ENCODE measurements at regions of chr13 and their contacts with region 1.

Region 1: DNA sequence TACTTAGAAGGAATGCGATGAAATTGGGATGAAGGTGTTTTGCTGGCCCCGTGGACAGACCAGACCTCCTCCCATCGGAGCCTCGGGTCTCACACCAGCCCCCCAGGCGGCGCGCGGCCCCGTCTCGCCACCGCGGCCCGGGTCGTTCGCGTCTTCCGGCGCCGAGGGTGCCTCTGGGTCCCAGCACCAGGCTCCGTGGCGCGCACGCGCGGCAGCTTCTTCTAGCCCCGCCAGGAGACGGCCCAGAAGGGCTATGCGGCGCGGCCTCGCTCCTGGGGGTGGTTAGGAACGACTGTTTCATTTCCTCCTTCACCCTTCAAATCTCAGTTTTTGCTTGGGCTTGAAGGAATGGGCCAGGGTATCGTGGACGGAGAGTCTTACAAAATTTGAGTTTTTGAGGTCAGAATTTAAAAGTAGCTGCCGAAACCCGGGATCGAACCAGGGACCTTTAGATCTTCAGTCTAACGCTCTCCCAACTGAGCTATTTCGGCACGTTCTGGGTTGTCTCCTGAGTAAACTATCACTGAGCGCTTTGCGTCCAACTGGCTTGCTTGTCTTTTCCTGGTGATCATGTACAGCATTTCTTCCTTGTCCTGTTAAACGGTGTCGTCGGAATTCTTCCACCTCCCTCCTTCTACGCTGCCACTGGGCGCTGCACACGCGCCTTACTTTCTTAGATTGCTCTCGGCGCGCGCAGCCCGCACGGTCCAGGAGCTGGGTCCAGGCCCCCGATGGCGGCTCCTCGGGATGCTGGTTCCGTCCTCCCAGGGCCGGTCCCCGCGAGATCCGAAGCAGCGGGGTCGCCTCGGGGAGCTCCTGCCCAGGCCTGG is 46.5 kb downstream of the TGDS start:
- DNase-seq: peak; percentile 87
- H3K4me3 Mint-ChIP-seq: peak overlapping the region; percentile 84
- H3K27ac Mint-ChIP-seq: peak overlapping the region; percentile 99
- H3K4me1 Mint-ChIP-seq: peaks cover 25% of the 10 kb centered on the region
- H3K27me3 Mint-ChIP-seq: peaks cover 15% of the 10 kb centered on the region

Region 2: GRCh38 chr13:93794197-93794885 is 755.1 kb before region 1 on chr13:
- intact Hi-C with region 1: loop called (anchors 1 kb)
- DNase-seq: peak; percentile 5
- H3K4me3 Mint-ChIP-seq: no peak overlapping the region
- H3K27ac Mint-ChIP-seq: peak overlapping the region; percentile 59
- H3K4me1 Mint-ChIP-seq: peaks cover 10% of the 10 kb centered on the region
- H3K27me3 Mint-ChIP-seq: peaks cover 5% of the 10 kb centered on the region

Region 3: DNA sequence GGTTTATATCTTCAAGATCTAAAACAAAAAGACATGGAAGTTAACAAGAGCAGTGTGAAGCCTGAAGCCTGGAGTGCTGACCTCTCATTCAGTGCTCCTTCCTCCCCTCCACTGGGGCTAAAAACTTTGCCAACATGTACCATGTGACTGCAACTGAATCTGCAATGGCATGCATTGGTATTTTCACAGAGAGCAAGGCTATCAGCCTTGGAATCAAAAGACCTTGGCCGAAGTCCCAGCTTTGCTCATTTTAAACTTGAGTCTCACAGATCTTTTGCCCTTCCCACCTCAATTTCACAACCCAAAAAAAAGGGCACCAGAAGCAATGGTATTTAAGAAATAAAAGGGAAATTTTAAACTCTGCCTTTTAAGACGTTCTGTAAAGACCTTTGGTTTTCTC is 395.1 kb before region 1 on chr13:
- intact Hi-C with region 1: no loop called
- DNase-seq: no peak
- H3K4me3 Mint-ChIP-seq: no peak overlapping the region
- H3K27ac Mint-ChIP-seq: no peak overlapping the region
- H3K4me1 Mint-ChIP-seq: no peaks in the 10 kb centered on the region
- H3K27me3 Mint-ChIP-seq: peaks cover 2% of the 10 kb centered on the region

Region 4: GRCh38 chr13:94435604-94436226 is 113.7 kb before region 1 on chr13:
- intact Hi-C with region 1: loop called (anchors 1 kb)
- DNase-seq: no peak
- H3K4me3 Mint-ChIP-seq: no peak overlapping the region
- H3K27ac Mint-ChIP-seq: no peak overlapping the region
- H3K4me1 Mint-ChIP-seq: peaks cover 15% of the 10 kb centered on the region
- H3K27me3 Mint-ChIP-seq: peaks cover 5% of the 10 kb centered on the region

Region 5: GRCh38 chr13:94595950-94596574 is 46.6 kb after region 1 on chr13 and contains the start of gene TGDS:
- intact Hi-C with region 1: loop called (anchors 1 kb)
- DNase-seq: peak; percentile 88
- H3K4me3 Mint-ChIP-seq: peak within 1 kb of the TSS; percentile 93
- H3K27ac Mint-ChIP-seq: peak within 1 kb of the TSS; percentile 95
- H3K4me1 Mint-ChIP-seq: peaks cover 40% of the 10 kb centered on the region
- H3K27me3 Mint-ChIP-seq: no peaks in the 10 kb centered on the region
- total RNA-seq, gene TGDS: 29.7 TPM in 2 replicates

Region 6: DNA sequence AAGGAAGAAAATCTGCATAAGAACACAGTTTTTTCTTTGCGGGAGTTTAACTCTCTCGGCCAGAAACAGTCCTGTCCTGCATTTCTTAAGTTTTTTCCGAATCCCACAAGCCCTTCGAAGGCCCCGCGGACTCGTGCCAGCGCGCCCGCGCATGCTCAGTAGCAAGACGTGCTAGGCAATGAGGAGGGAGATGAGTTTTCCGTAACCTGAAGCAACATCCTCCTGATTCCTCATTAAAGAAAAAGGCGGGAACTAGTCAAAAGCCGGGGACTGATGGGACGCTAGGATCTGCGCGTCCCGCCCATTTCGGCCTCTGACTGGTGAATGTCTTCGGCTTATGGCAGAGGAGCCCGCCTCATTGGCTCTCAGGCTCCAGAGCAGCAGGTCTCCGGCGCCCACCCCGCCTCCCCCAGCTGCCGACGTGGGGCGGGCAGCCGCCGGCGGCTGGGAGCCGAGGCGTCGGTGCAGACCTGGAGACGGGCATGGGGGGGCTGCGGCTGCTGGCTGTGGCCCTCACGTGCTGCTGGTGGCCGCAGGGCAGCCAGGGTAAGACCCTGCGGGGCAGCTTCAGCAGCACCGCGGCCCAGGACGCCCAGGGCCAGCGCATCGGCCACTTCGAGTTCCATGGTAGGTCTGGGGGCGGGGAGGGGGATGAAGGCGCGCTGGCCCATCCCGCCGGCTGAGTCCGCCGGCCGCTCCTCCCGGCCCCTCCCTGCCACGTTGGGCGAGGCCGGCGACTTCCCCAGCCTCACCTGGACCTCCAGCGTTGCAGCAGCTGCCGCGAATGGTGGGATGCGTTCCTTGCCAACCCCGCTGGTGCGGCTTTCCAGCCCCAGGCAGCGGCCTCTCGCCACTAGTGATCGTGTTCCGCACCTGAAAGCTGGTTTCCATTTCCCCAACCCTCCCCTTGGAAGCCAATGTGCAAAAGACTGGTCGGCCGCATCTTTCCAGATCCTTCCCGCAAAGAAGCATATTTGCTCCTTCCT is 52.3 kb after region 1 on chr13 and contains the start of gene GPR180:
- intact Hi-C with region 1: loop called (anchors 1 kb)
- DNase-seq: peak; percentile 89
- H3K4me3 Mint-ChIP-seq: peak within 1 kb of the TSS; percentile 88
- H3K27ac Mint-ChIP-seq: peak within 1 kb of the TSS; percentile 75
- H3K4me1 Mint-ChIP-seq: peaks cover 31% of the 10 kb centered on the region
- H3K27me3 Mint-ChIP-seq: no peaks in the 10 kb centered on the region
- total RNA-seq, gene GPR180: 9.6 and 11.1 TPM in 2 replicates

Measured in activated T-helper 1 cell treated with anti-CD3 and anti-CD28 coated beads, Interleukin-12 subunit alpha, Interleukin-12 subunit beta, Interleukin-2, Interleukin-4 antibody, amounts not matched to agents 30 ng/mL and 10 ng/mL and 1 ng/mL, durations not matched to agents 14 hours and 24 hours and 36 hours (primary cell).